H1 (cell line): ENCODE measurements at regions of chr11 and their contacts with region 1.

Region 1: DNA sequence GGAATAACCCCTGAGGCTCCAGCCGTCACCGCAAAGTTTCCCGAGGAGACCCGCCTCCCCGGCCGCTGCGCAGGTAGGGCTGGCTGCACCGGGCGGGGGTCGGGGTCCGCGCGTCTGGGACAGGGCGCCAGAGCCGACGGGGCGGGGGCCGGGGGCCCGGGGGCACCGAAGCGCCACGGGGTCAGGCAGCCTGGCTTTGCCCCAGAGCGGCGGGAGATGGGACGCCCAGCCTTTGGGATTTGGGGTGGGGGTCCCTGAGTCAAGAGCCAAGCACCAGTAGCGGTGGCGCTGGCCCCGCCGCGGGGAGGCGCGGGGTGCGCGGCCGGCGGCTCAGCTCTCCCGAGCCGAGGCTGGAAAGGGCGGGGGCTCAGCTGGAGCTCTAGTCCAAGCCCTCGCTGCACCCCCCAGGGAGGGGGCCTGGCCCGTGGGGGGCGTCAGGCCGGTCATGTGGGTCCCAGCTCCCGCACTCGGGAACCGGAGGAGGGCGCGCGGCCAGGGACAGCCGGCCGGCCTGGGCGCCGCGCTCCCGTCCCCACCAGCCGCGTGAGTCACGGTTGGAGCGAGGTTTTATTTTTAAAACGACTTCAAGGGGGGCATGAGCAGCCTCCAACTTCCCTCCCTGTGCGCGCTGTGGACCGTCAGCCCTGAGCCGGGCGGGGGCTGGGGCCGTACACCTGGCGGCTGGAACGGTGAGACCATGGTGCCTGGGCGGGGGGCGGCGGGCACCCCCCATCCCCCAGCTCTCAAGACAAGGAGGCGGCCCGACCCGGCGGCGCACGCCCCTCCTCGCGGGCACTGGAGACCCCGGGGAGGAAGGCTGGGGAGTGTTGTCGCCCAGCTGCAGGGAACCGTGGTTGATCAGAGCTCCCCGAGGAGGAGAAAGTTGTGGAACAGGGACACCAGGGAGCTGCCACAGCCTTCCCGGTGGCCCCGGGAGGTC is 626 bp downstream of the FLRT1 start:
- DNase-seq: no peak
- H3K4me3 ChIP-seq: peak overlapping the region; percentile 27 to 67 (median 42)
- H3K27ac ChIP-seq: no peak overlapping the region
- H3K4me1 ChIP-seq: peaks cover 5 to 16% (median 10%) of the 10 kb centered on the region in 4 experiments; a peak in 6 of 7 replicates
- H3K27me3 ChIP-seq: peaks cover 59 to 92% (median 83%) of the 10 kb centered on the region in 4 experiments
- CTCF ChIP-seq: no peak
- EP300 ChIP-seq: no peak
- POLR2A ChIP-seq: no peak
- RAD21 ChIP-seq: no peak

Region 2: GRCh38 chr11:63896071-63896470 is 140.3 kb before region 1 on chr11:
- CTCF ChIA-PET with region 1: no interaction called
- POLR2A ChIA-PET with region 1: no interaction called
- DNase-seq: no peak
- H3K4me3 ChIP-seq: no peak overlapping the region
- H3K27ac ChIP-seq: no peak overlapping the region
- H3K4me1 ChIP-seq: 0 out of 7 replicates have a peak, but pooled peaks cover 0 to 5% (median 0%) of the 10 kb centered on the region in 4 experiments
- H3K27me3 ChIP-seq: no peaks in the 10 kb centered on the region
- CTCF ChIP-seq: no peak
- EP300 ChIP-seq: no peak
- POLR2A ChIP-seq: no peak
- RAD21 ChIP-seq: no peak

Region 3: GRCh38 chr11:63938479-63939396 is 97.6 kb before region 1 on chr11 and contains the start of gene NAA40:
- CTCF ChIA-PET with region 1: no interaction called
- POLR2A ChIA-PET with region 1: no interaction called
- DNase-seq: peak; percentile 94 to 96
- H3K4me3 ChIP-seq: peak within 1 kb of the TSS; percentile 65 to 99 (median 76)
- H3K27ac ChIP-seq: peak within 1 kb of the TSS; percentile 97
- H3K4me1 ChIP-seq: no peaks in the 10 kb centered on the region; a peak in 1 of 7 replicates
- H3K27me3 ChIP-seq: no peaks in the 10 kb centered on the region
- CTCF ChIP-seq: peak in 1 of 3 experiments; percentile 0; a peak in 1 of 4 replicates
- EP300 ChIP-seq: peak in 1 of 2 experiments; percentile 45; a peak in 2 of 3 replicates
- POLR2A ChIP-seq: peak in 1 of 2 experiments; percentile 78; a peak in 2 of 3 replicates
- RAD21 ChIP-seq: no peak
- total RNA-seq, gene NAA40: 31.1 and 34.1 TPM in 2 replicates

Region 4: DNA sequence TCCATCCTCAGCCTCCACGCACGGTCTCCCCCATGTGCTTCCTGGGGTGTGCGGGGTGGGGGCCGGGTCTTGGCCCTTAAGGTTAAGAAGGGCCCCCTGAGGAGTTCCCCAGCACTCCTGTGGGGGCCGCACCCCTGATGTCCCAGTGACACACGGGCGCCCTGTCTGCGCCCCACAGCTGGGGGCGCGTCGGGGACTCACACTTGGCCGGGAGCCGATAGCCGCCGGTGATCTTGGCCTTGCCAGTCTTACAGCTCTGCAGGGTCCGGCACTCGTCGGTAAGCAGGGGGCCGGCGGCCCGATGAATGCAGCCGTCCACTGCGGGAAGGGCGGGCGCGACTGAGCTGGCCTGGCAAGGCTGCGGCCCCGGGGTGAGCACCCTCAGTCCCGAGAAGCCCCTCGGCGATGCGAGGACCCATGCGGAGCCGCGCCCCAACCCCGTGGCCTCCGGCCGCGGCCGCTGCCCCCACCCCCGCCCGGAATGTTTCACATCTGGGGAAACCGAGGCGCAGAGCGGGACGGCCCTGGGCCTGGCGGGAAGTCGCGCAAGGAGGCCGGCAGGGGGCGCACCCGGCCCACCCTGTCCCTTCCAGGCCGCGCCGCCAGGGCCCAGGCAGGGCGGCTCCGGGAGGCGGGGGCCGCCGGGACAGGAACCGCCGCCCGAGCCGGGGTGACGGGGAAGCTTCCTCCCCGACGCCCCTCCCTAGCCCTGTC is 36.2 kb before region 1 on chr11:
- CTCF ChIA-PET with region 1: interaction called, 41 read pairs
- POLR2A ChIA-PET with region 1: interaction called, 8 read pairs
- DNase-seq: peak in 1 of 2 experiments; percentile 91
- H3K4me3 ChIP-seq: peak overlapping the region; percentile 14 to 61 (median 47)
- H3K27ac ChIP-seq: no peak overlapping the region
- H3K4me1 ChIP-seq: peaks cover 2 to 23% (median 12%) of the 10 kb centered on the region in 4 experiments; a peak in 6 of 7 replicates
- H3K27me3 ChIP-seq: peaks cover 5 to 36% (median 24%) of the 10 kb centered on the region in 4 experiments
- CTCF ChIP-seq: peak in 2 of 3 experiments; percentile 57 to 92; a peak in 3 of 4 replicates
- EP300 ChIP-seq: no peak
- POLR2A ChIP-seq: no peak
- RAD21 ChIP-seq: peak; percentile 69 to 84

Region 5: DNA sequence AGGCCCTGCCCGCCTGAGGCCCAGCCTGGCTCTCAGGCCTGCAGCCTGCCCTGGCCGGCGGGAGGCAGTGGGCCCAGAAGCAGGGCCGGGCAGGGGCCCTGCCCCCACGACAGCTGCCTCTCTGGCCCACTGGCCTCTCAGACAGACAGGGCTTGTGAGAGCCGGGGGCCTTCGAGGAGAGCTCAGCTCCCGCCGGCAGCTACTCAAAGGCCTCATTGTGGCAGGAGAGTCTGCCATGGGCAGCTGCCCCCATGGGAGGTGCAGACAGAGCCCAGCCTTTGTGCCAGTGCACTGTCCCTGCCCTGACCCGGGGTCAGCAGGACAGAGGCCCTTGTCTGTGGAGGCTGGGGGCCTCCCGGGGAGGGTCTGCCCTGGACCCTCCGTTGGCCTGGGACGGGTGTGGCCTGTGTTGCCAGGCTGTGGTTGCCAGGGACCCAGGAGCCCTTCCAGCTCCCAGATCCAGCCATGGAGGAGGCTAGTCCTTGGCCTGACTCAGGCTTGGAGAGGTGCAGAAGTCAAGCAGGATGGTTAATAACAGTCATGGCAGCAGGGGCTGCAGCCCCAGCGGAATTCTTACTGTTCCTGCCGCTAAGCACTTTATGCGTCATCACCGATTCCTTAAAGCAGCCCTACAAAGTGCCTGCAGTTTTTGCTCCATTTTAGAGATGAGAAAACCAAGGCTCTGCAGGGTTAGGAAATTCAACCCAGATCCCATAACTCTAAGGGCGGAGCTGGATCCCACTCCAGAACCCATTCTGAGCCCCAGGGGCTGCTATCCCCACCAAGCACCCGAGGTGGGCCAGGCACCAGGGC is 11.9 kb after region 1 on chr11:
- CTCF ChIA-PET with region 1: interaction called, 42 read pairs
- POLR2A ChIA-PET with region 1: interaction called, 3 read pairs
- DNase-seq: no peak
- H3K4me3 ChIP-seq: no peak overlapping the region
- H3K27ac ChIP-seq: no peak overlapping the region
- H3K4me1 ChIP-seq: peaks cover 2 to 10% (median 7%) of the 10 kb centered on the region in 4 experiments
- H3K27me3 ChIP-seq: peaks cover 1 to 68% (median 43%) of the 10 kb centered on the region in 4 experiments
- CTCF ChIP-seq: no peak
- EP300 ChIP-seq: no peak
- POLR2A ChIP-seq: no peak
- RAD21 ChIP-seq: no peak

Region 6: DNA sequence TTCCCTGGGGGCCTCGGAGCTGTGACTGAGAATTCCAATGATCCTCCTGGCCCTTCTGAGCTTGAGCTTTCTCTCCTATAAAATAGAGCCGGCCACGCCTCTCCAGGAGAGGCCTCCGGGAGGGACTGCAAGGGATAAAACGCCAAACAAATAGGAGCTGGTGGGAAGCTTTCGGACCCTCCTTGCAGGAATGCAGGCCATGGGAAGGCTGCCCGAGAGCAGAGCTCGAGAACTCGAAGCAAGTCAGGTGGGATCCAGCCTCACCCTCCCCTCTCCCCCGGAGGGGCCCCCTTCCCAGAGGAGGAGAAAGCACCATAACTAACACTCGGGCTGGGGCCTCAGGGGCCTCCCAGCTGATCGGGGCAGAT is 33.9 kb after region 1 on chr11:
- CTCF ChIA-PET with region 1: interaction called, 22 read pairs
- POLR2A ChIA-PET with region 1: no interaction called
- DNase-seq: no peak
- H3K4me3 ChIP-seq: no peak overlapping the region
- H3K27ac ChIP-seq: no peak overlapping the region
- H3K4me1 ChIP-seq: peaks cover 0 to 13% (median 4%) of the 10 kb centered on the region in 4 experiments; a peak in 4 of 7 replicates
- H3K27me3 ChIP-seq: peaks cover 2 to 64% (median 38%) of the 10 kb centered on the region in 4 experiments
- CTCF ChIP-seq: no peak
- EP300 ChIP-seq: no peak
- POLR2A ChIP-seq: no peak
- RAD21 ChIP-seq: no peak

Region 7: GRCh38 chr11:64094463-64095260 is 58.3 kb after region 1 on chr11:
- CTCF ChIA-PET with region 1: interaction called, 10 read pairs
- POLR2A ChIA-PET with region 1: no interaction called
- DNase-seq: no peak
- H3K4me3 ChIP-seq: no peak overlapping the region
- H3K27ac ChIP-seq: no peak overlapping the region
- H3K4me1 ChIP-seq: peaks cover 0 to 8% (median 5%) of the 10 kb centered on the region in 4 experiments; a peak in 6 of 7 replicates
- H3K27me3 ChIP-seq: peaks cover 0 to 65% (median 48%) of the 10 kb centered on the region in 4 experiments; a peak in 6 of 7 replicates
- CTCF ChIP-seq: peak in 2 of 3 experiments; percentile 14 to 31; a peak in 1 of 4 replicates
- EP300 ChIP-seq: no peak
- POLR2A ChIP-seq: no peak
- RAD21 ChIP-seq: peak in 1 of 2 experiments; percentile 11; a peak in 1 of 4 replicates

Region 8: DNA sequence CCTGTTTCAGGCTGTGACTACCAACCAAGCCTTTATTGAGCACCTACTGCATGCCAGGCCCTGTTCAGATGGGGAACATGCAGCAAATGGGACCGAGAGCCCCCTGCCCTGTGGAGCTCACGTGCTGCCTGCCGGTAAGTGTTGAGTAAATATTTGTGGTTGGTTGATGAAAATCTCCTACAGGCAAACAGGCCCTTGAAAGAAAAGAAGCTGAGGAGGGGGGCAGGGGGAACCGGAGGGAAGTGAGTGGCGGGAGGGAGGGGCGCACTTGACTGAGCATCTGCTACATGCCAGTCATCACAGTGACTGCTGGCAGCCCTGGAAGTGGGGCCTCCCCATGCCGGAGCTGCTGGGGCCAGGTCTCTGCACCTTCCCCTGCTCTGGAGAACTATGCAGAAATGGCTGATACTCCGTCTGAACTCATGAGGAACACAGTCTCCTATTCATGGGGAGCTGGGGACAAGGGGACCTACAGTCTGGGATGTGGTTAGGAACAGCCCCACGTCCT is 95.4 kb after region 1 on chr11:
- CTCF ChIA-PET with region 1: interaction called, 25 read pairs
- POLR2A ChIA-PET with region 1: no interaction called
- DNase-seq: no peak
- H3K4me3 ChIP-seq: no peak overlapping the region
- H3K27ac ChIP-seq: no peak overlapping the region
- H3K4me1 ChIP-seq: peaks cover 0 to 14% (median 9%) of the 10 kb centered on the region in 4 experiments; a peak in 5 of 7 replicates
- H3K27me3 ChIP-seq: peaks cover 0 to 35% (median 16%) of the 10 kb centered on the region in 4 experiments; a peak in 5 of 7 replicates
- CTCF ChIP-seq: no peak
- EP300 ChIP-seq: no peak
- POLR2A ChIP-seq: no peak
- RAD21 ChIP-seq: no peak